ENCODE measurements at regions of chr19 and their contacts with region 1.

Region 1: DNA sequence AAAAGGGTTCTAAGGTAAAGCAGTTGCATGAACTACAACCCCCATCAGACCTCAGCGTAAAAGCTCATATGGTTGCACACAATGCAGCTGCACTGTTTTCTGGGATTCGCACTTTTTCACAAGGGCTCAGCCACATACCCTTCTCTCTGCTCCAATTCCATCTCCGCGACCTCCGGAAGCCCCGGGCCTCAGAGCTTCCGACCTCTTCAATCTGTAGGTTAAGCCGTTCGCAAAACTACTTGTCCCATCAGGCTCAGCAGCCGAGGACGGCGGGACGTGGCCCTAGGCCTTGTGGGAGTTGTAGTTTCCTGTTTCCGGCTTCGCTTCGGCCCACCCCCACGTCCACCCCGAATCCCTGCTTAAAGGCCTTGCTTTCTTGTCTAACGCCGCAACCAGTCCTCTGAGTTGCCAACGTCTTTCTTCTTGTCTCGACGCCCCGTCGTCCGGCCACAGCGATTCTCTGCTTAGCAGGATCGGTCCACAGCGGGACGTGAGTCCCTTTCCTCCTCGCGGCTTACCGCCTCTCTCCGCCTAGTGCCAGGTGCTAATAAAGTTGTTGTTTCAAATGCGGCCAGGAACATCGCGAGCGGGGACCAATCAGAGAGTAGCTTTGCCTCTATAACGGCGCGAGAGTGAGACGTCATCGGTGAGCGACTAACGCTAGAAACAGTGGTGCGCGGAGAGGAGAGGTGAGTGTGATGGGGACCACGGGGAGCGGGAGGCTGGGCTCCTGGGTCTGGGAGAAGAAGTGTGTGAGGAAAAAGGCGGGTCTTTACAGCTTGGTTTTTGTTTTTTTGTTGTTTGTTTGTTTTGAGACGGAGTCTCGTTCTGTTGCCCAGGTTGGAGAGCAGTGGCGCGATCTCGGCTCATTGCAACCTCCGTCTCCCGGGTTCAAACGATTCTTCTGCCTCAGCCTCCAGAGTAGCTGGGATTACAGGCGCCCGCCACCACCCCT is at the starts of genes PRPF31 and TFPT:
- DNase-seq: peak; percentile 90
- ATAC-seq: peak; percentile 93
- H3K4me3 Mint-ChIP-seq: peak within 1 kb of the TSS; percentile 94
- H3K27ac Mint-ChIP-seq: peak within 1 kb of the TSS; percentile 98
- H3K4me1 Mint-ChIP-seq: peaks cover 36% of the 10 kb centered on the region
- H3K27me3 Mint-ChIP-seq: no peaks in the 10 kb centered on the region
- CTCF ChIP-seq: no peak
- total RNA-seq, gene PRPF31: 78.9 and 79.3 TPM in 2 replicates
- total RNA-seq, gene TFPT: 16.6 and 17.9 TPM in 2 replicates

Region 2: GRCh38 chr19:53867225-53868090 is 247.9 kb before region 1 on chr19 and contains the start of gene MYADM:
- CTCF ChIA-PET with region 1: no interaction called
- POLR2A ChIA-PET with region 1: interaction called, 4 read pairs
- intact Hi-C with region 1: loop called (anchors 5 kb)
- DNase-seq: peak; percentile 99
- ATAC-seq: peak; percentile 65
- H3K4me3 Mint-ChIP-seq: peak within 1 kb of the TSS; percentile 91
- H3K27ac Mint-ChIP-seq: peak within 1 kb of the TSS; percentile 93
- H3K4me1 Mint-ChIP-seq: peaks cover 44% of the 10 kb centered on the region
- H3K27me3 Mint-ChIP-seq: no peaks in the 10 kb centered on the region
- CTCF ChIP-seq: no peak
- total RNA-seq, gene MYADM: 10.9 and 12.9 TPM in 2 replicates

Region 3: GRCh38 chr19:53927739-53928138 is 187.6 kb before region 1 on chr19:
- CTCF ChIA-PET with region 1: no interaction called
- POLR2A ChIA-PET with region 1: no interaction called
- intact Hi-C with region 1: no loop called
- DNase-seq: no peak
- ATAC-seq: no peak
- H3K4me3 Mint-ChIP-seq: no peak overlapping the region
- H3K27ac Mint-ChIP-seq: no peak overlapping the region
- H3K4me1 Mint-ChIP-seq: no peaks in the 10 kb centered on the region
- H3K27me3 Mint-ChIP-seq: no peaks in the 10 kb centered on the region
- CTCF ChIP-seq: no peak

Region 4: DNA sequence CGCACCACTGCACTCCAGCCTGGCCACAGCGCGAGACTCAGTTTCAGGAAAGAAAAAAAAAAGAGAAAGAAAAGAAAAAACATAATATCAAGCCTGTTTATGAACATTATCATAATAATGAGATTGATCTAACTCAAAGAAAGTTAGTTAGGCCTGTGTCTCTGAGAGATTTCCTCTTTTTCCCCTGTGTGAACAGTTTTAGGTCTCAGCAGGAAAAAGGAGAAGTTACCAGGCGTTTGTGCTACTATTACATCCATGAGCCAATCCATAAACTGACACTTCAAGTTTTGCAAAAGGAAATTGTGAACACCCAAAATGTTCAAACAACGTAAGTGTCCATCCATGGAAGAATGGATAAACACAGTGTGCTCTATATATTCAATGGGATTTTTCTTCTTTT is 38.1 kb before region 1 on chr19:
- CTCF ChIA-PET with region 1: no interaction called
- POLR2A ChIA-PET with region 1: no interaction called
- intact Hi-C with region 1: no loop called
- DNase-seq: no peak
- ATAC-seq: no peak
- H3K4me3 Mint-ChIP-seq: no peak overlapping the region
- H3K27ac Mint-ChIP-seq: no peak overlapping the region
- H3K4me1 Mint-ChIP-seq: no peaks in the 10 kb centered on the region
- H3K27me3 Mint-ChIP-seq: no peaks in the 10 kb centered on the region
- CTCF ChIP-seq: no peak

Region 5: DNA sequence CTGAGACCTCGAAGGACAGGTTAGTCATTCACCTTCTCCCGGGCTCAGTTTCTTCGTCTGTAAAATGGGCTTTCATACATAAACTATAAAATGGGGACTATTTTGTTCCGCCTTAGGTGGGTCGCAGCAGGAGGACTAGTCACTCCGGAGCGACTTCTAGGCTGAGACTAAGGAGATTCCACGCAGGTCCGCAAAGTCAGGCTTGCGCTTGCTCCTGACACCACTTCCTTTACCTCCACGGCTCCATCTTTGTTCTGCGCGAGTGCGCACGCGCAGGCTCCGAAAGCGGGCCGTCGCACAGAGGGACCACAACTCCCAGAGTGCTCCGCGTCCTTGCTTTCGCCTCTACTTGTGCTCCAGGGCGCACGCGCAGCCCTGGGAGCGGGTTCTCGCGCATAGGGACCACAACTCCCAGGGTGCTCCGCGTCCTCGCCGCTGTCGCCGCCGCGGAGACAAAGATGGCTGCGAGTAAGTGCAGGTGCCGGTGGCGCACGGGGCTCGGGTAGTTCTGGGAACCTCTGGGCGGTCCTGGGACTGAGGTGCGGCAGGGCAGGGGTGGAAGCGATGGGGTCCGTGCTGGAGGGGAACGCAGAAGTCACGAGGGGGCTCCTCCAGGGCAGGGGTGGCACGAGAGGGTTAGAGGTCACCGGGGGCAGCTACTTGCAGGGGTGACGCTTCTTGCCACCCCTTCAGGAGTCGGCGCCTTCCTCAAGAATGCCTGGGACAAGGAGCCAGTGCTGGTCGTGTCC is 12.8 kb before region 1 on chr19 and contains the start of gene NDUFA3:
- CTCF ChIA-PET with region 1: no interaction called
- POLR2A ChIA-PET with region 1: interaction called, 39 read pairs
- intact Hi-C with region 1: loop called (anchors 1 kb)
- DNase-seq: peak; percentile 93
- ATAC-seq: peak; percentile 97
- H3K4me3 Mint-ChIP-seq: peak within 1 kb of the TSS; percentile 99
- H3K27ac Mint-ChIP-seq: peak within 1 kb of the TSS; percentile 93
- H3K4me1 Mint-ChIP-seq: peaks cover 15% of the 10 kb centered on the region
- H3K27me3 Mint-ChIP-seq: no peaks in the 10 kb centered on the region
- CTCF ChIP-seq: no peak
- total RNA-seq, gene NDUFA3: 94.7 and 96.1 TPM in 2 replicates

Region 6: GRCh38 chr19:54159352-54160181 is 44.2 kb after region 1 on chr19 and contains the start of gene LENG1:
- CTCF ChIA-PET with region 1: no interaction called
- POLR2A ChIA-PET with region 1: interaction called, 18 read pairs
- intact Hi-C with region 1: loop called (anchors 1 kb)
- DNase-seq: peak; percentile 84
- ATAC-seq: peak; percentile 85
- H3K4me3 Mint-ChIP-seq: peak within 1 kb of the TSS; percentile 100
- H3K27ac Mint-ChIP-seq: peak within 1 kb of the TSS; percentile 99
- H3K4me1 Mint-ChIP-seq: peaks cover 51% of the 10 kb centered on the region
- H3K27me3 Mint-ChIP-seq: peaks cover 8% of the 10 kb centered on the region
- CTCF ChIP-seq: no peak
- total RNA-seq, gene LENG1: 8.3 and 8.4 TPM in 2 replicates

Region 7: GRCh38 chr19:54203151-54203611 is 87.8 kb after region 1 on chr19:
- CTCF ChIA-PET with region 1: no interaction called
- POLR2A ChIA-PET with region 1: interaction called, 14 read pairs
- intact Hi-C with region 1: no loop called
- DNase-seq: no peak
- ATAC-seq: no peak
- H3K4me3 Mint-ChIP-seq: peak overlapping the region; percentile 100
- H3K27ac Mint-ChIP-seq: peak overlapping the region; percentile 24
- H3K4me1 Mint-ChIP-seq: peaks cover 82% of the 10 kb centered on the region
- H3K27me3 Mint-ChIP-seq: no peaks in the 10 kb centered on the region
- CTCF ChIP-seq: no peak

Region 8: GRCh38 chr19:54430306-54431254 is 315.2 kb after region 1 on chr19:
- CTCF ChIA-PET with region 1: no interaction called
- POLR2A ChIA-PET with region 1: no interaction called
- intact Hi-C with region 1: no loop called
- DNase-seq: peak; percentile 34
- ATAC-seq: peak; percentile 93
- H3K4me3 Mint-ChIP-seq: peak overlapping the region; percentile 58
- H3K27ac Mint-ChIP-seq: no peak overlapping the region
- H3K4me1 Mint-ChIP-seq: peaks cover 20% of the 10 kb centered on the region
- H3K27me3 Mint-ChIP-seq: peaks cover 23% of the 10 kb centered on the region
- CTCF ChIP-seq: no peak

Region 9: DNA sequence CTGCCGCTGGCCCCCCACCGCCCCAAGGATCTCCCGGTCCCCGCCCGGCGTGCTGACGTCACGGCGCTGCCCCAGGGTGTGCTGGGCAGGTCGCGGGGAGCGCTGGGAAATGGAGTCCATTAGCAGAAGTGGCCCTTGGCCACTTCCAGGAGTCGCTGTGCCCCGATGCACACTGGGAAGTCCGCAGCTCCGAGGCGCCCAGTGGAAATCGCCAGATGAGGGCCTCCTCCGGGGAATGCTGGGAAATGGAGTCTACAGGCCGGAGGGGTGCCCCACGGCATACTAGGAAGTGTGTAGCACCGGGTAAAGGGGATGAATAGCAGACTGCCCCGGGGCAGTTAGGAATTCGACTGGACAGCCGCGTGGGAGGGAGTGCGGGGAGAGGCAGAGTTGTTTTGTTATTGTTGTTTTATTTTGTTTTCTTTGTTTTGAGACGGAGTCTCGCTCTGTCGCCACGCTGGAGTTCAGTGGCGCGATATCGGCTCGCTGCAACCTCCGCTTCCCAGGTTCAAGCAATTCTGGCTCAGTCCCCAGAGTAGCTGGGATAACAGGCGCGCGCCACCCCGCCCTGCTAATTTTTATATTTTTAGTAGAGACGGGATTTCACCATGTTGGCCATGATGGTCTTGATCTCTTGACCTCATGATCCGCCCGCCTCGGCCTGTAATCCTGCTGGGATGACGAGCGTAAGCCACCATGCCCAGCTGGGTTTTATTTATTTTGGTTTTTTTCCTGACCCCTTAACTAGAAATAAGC is 1002.4 kb after region 1 on chr19 and contains the start of gene PPP1R12C:
- CTCF ChIA-PET with region 1: no interaction called
- POLR2A ChIA-PET with region 1: no interaction called
- intact Hi-C with region 1: loop called (anchors 1 kb)
- DNase-seq: peak; percentile 96
- ATAC-seq: peak; percentile 93
- H3K4me3 Mint-ChIP-seq: peak within 1 kb of the TSS; percentile 97
- H3K27ac Mint-ChIP-seq: peak within 1 kb of the TSS; percentile 87
- H3K4me1 Mint-ChIP-seq: peaks cover 55% of the 10 kb centered on the region
- H3K27me3 Mint-ChIP-seq: no peaks in the 10 kb centered on the region
- CTCF ChIP-seq: no peak
- total RNA-seq, gene PPP1R12C: 115 and 139 TPM in 2 replicates